ENCODE measurements at regions of chr19 and their contacts with region 1.

Region 1: DNA sequence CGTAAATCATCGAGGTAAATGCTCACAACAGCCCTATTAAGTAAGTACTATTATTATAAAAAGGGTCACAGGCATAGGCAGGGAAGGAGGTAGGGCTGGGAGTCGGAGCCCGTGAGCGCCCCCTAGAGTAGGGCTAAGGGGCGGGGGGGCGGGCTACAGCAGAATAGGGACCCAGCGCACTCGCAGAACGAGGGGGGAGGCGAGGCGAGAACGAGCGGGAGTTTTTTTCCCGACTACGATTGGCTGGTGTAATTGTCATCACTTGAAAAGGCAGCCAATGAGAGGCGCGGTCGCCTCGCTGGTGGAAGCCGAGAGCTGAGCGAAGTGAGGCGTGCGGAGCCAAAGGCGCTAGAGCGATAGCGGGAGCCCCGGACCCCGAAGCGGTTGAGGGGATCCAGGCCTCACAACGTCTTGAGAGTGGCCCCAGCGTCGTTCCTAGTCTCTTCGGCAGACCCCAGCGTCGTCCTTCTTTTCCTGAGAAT is 24.2 kb downstream of the KEAP1 start:
- DNase-seq: peak; percentile 89
- H3K4me3 ChIP-seq: peak overlapping the region; percentile 12 to 49 (median 20)
- H3K27ac ChIP-seq: peak overlapping the region in 3 of 4 donors; percentile 5 to 51 (median 41)
- H3K4me1 ChIP-seq: peaks cover 3 to 33% (median 12%) of the 10 kb centered on the region in 4 donors
- H3K27me3 ChIP-seq: no peaks in the 10 kb centered on the region
- CTCF ChIP-seq: peak in 4 of 5 experiments; percentile 21 to 80 (median 75)
- EP300 ChIP-seq: no peak
- POLR2A ChIP-seq: no peak

Region 2: GRCh38 chr19:10403137-10404021 is 75.6 kb before region 1 on chr19 and contains the start of gene CDC37:
- in situ Hi-C with region 1: no loop called
- intact Hi-C with region 1: loop called (anchors 2 kb)
- DNase-seq: peak; percentile 98
- H3K4me3 ChIP-seq: peak within 1 kb of the TSS; percentile 68 to 83 (median 78)
- H3K27ac ChIP-seq: peak within 1 kb of the TSS; percentile 82 to 88 (median 84)
- H3K4me1 ChIP-seq: peaks cover 23 to 43% (median 31%) of the 10 kb centered on the region in 4 donors
- H3K27me3 ChIP-seq: peaks cover 40% of the 10 kb centered on the region
- CTCF ChIP-seq: no peak
- EP300 ChIP-seq: no peak
- POLR2A ChIP-seq: peak; percentile 87
- total RNA-seq, gene CDC37: 125 to 168 (median 162) TPM

Region 3: GRCh38 chr19:10644260-10645007 is 165.5 kb after region 1 on chr19:
- in situ Hi-C with region 1: no loop called
- intact Hi-C with region 1: no loop called
- DNase-seq: peak; percentile 90
- H3K4me3 ChIP-seq: no peak overlapping the region
- H3K27ac ChIP-seq: peak overlapping the region in 3 of 4 donors; percentile 19 to 51 (median 29)
- H3K4me1 ChIP-seq: peaks cover 0 to 9% (median 4%) of the 10 kb centered on the region in 4 donors
- H3K27me3 ChIP-seq: no peaks in the 10 kb centered on the region
- CTCF ChIP-seq: peak; percentile 83 to 96 (median 85)
- EP300 ChIP-seq: no peak
- POLR2A ChIP-seq: peak; percentile 8

Measured in transverse colon (tissue), 4 donors.